Thyroid gland (tissue), 4 donors: ENCODE measurements at regions of chr10 and their contacts with region 1.

Region 1: GRCh38 chr10:7417103-7417623 is 6.3 kb upstream of the SFMBT2 start:
- DNase-seq: no peak
- H3K4me3 ChIP-seq: no peak overlapping the region
- H3K27ac ChIP-seq: no peak overlapping the region
- H3K4me1 ChIP-seq: peaks cover 10% of the 10 kb centered on the region in 2 donors
- H3K27me3 ChIP-seq: no peaks in the 10 kb centered on the region
- CTCF ChIP-seq: peak in 5 of 6 experiments; percentile 19 to 75 (median 63)
- POLR2A ChIP-seq: no peak

Region 2: DNA sequence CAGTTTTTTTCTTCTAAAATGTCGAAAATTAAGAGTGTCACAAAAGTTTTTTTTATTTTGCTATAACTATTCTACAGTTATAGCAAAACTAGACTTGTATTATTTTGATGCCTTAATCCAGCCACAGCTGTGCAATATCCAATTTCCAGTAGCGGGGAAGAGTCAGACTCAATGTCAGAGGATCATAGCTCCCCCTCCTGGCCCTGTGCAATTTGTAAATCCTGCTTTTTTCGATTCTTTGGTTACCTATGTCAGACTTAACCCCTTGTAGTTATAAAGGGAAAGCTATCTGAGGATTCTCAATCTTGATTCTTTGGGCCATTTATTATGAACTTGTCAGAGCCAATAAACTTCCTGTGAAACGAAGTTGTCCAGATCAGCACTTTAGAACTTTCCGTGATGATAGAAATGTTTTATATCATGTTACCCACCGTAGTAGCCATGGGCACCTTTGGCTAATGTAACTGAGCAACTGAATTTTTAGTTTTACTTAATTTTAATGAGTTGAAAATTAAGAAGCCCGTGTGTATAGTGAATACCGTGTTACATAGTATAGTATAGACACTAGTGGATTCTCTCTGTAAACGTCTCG is 749.4 kb before region 1 on chr10:
- intact Hi-C with region 1: loop called (anchors 5 kb)
- DNase-seq: peak; percentile 60
- H3K4me3 ChIP-seq: no peak overlapping the region
- H3K27ac ChIP-seq: no peak overlapping the region
- H3K4me1 ChIP-seq: no peaks in the 10 kb centered on the region
- H3K27me3 ChIP-seq: no peaks in the 10 kb centered on the region
- CTCF ChIP-seq: peak; percentile 18 to 64 (median 54)
- POLR2A ChIP-seq: no peak